H1 (cell line): ENCODE measurements at regions of chr20 and their contacts with region 1.

Region 1: DNA sequence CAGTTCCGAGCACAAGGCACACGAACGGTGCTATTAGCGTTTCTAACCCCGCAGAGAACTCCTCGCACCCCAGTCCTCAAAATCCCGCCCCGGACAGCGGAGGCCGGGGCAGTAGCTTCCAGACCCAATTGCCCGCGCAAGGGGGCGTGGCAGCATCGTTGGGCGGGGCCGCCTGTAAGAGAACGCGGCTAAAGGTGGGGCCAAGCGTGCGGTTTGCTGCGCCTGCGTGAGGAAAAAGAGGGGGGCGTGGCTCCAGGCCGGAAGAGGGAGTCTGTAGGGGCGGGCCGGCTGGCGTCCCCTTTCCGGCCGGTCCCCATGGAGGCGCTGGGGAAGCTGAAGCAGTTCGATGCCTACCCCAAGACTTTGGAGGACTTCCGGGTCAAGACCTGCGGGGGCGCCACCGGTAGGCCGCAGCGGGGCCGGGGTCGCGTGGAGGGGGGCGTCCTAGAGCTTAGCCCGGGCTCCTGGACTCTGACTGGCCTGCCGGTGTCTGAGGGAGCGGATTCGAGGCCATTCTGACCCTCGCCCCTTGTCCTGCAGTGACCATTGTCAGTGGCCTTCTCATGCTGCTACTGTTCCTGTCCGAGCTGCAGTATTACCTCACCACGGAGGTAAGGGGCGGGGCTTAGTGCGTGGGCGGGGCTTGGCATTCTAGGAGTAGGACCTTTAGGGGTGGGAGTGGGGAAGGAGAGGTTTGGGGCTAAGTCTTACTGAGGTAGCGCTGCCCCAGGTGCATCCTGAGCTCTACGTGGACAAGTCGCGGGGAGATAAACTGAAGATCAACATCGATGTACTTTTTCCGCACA is at the start of gene ERGIC3:
- DNase-seq: peak; percentile 97 to 99
- H3K4me3 ChIP-seq: peak within 1 kb of the TSS; percentile 74 to 82 (median 76)
- H3K27ac ChIP-seq: peak within 1 kb of the TSS; percentile 91
- H3K4me1 ChIP-seq: peaks cover 2 to 6% (median 4%) of the 10 kb centered on the region in 4 experiments; a peak in 5 of 7 replicates
- H3K27me3 ChIP-seq: no peaks in the 10 kb centered on the region
- CTCF ChIP-seq: peak in 2 of 3 experiments; percentile 4 to 8; a peak in 1 of 4 replicates
- EP300 ChIP-seq: no peak
- POLR2A ChIP-seq: peak; percentile 69 to 93
- RAD21 ChIP-seq: 0 out of 4 replicates have a peak, but pooled peaks of 1 of the 2 experiments have one; percentile 1
- total RNA-seq, gene ERGIC3: 174 and 178 TPM in 2 replicates

Region 2: GRCh38 chr20:35511814-35512420 is 30.1 kb before region 1 on chr20:
- CTCF ChIA-PET with region 1: interaction called, 11 read pairs
- POLR2A ChIA-PET with region 1: interaction called, 3 read pairs
- DNase-seq: no peak
- H3K4me3 ChIP-seq: no peak overlapping the region
- H3K27ac ChIP-seq: no peak overlapping the region
- H3K4me1 ChIP-seq: no peaks in the 10 kb centered on the region
- H3K27me3 ChIP-seq: no peaks in the 10 kb centered on the region
- CTCF ChIP-seq: peak in 2 of 3 experiments; percentile 55 to 71; a peak in 2 of 4 replicates
- EP300 ChIP-seq: no peak
- POLR2A ChIP-seq: no peak
- RAD21 ChIP-seq: peak; percentile 78 to 82

Region 3: DNA sequence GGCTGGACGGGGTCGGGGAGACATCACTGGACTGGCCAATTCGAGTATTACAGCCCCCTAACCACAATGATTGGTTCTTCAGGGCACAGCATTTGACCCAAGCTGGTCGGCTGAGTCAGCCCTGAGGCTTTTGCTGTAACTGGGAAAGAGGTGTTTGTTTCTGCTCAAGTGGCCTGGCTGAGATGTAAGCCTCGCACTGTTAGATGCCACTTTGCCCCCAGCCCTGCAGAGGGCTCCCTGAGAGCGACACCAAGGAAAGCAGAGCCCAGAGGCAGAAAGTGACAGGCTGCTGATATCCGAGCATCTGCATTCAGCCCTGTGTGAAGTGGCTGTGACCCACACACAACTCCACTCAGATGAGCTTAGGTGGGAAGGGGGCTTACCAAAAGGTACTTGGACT is 19.3 kb after region 1 on chr20:
- CTCF ChIA-PET with region 1: interaction called, 5 read pairs
- POLR2A ChIA-PET with region 1: interaction called, 18 read pairs
- DNase-seq: peak in 1 of 2 experiments; percentile 66
- H3K4me3 ChIP-seq: no peak overlapping the region
- H3K27ac ChIP-seq: no peak overlapping the region
- H3K4me1 ChIP-seq: peaks cover 0 to 4% (median 2%) of the 10 kb centered on the region in 4 experiments; a peak in 4 of 7 replicates
- H3K27me3 ChIP-seq: no peaks in the 10 kb centered on the region
- CTCF ChIP-seq: peak; percentile 61 to 76 (median 61)
- EP300 ChIP-seq: no peak
- POLR2A ChIP-seq: no peak
- RAD21 ChIP-seq: peak; percentile 73 to 79

Region 4: DNA sequence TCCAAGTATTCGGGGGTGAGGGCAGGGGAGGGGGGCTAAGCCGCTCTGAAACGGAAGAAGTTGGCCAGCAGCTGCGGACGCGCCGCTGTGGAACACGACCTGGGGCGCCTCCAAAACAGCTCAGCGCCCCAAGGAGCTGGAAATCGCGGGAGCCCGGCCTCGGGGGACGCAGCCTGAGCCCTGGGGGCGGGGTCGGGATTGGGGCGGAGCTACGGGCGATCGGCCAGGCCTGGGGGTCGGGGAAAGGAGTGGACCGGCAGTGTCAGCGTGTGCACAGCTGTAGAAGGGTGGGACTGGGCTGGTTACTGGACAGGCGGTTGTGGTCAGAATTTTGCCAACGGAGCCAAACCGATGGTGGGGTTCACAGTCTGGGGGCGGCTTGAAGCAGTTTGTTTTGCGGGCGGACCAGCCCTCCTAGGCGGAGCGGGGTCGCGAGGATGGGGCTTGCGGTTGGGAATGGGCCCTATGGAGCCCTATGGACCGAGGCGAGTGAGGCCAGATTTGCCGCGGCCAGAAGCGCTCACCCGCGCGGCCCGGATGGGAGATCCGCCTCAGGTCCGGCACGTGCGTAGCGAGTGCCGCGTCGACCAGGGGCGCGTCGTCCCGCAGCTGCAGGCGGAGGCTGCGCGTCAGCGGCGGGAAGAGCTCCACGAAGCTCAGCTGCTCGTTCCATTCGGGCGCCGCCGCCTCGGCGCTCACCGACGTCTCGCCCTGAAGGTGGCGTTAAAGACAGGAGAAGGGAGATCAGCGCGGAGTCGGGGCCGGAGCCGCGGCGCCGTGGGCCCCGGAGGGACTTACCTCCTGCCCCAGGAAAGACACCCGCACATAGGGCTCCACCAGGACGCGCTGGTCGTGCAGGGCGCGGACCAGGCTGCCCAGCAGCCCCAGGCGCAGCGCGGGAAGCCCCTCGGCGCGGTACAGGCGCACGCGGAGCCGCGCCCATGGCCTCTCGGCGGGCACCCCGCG is 59.3 kb after region 1 on chr20:
- CTCF ChIA-PET with region 1: interaction called, 8 read pairs
- POLR2A ChIA-PET with region 1: interaction called, 13 read pairs
- DNase-seq: peak in 1 of 2 experiments; percentile 91
- H3K4me3 ChIP-seq: peak overlapping the region; percentile 28 to 66 (median 46)
- H3K27ac ChIP-seq: no peak overlapping the region
- H3K4me1 ChIP-seq: peaks cover 0 to 14% (median 7%) of the 10 kb centered on the region in 4 experiments; a peak in 4 of 7 replicates
- H3K27me3 ChIP-seq: peaks cover 6 to 46% (median 34%) of the 10 kb centered on the region in 4 experiments
- CTCF ChIP-seq: peak; percentile 16 to 42 (median 24); a peak in 3 of 4 replicates
- EP300 ChIP-seq: no peak
- POLR2A ChIP-seq: no peak
- RAD21 ChIP-seq: peak; percentile 25 to 29; a peak in 2 of 4 replicates